Dorsolateral prefrontal cortex (tissue), 120 donors: ENCODE measurements at regions of chr10 and their contacts with region 1.

Region 1: GRCh38 chr10:52740913-52741675 is 31.5 kb downstream of the MBL2 start:
- DNase-seq: peak in 2 of 10 donors; percentile 29 to 52
- H3K4me3 ChIP-seq: no peak overlapping the region
- H3K27ac ChIP-seq: no peak overlapping the region
- H3K27me3 ChIP-seq: peaks cover 0 to 4% (median 0%) of the 10 kb centered on the region in 45 donors
- CTCF ChIP-seq: peak; percentile 37 to 83 (median 74)

Region 2: GRCh38 chr10:52187521-52188258 is 553.4 kb before region 1 on chr10:
- intact Hi-C with region 1: no loop called
- DNase-seq: no peak
- H3K4me3 ChIP-seq: no peak overlapping the region
- H3K27ac ChIP-seq: no peak overlapping the region
- H3K27me3 ChIP-seq: peaks cover 0 to 4% (median 0%) of the 10 kb centered on the region in 45 donors
- CTCF ChIP-seq: no peak

Region 3: GRCh38 chr10:52720018-52720417 is 21.1 kb before region 1 on chr10:
- intact Hi-C with region 1: no loop called
- DNase-seq: no peak
- H3K4me3 ChIP-seq: no peak overlapping the region
- H3K27ac ChIP-seq: no peak overlapping the region
- H3K27me3 ChIP-seq: no peaks in the 10 kb centered on the region
- CTCF ChIP-seq: no peak

Region 4: DNA sequence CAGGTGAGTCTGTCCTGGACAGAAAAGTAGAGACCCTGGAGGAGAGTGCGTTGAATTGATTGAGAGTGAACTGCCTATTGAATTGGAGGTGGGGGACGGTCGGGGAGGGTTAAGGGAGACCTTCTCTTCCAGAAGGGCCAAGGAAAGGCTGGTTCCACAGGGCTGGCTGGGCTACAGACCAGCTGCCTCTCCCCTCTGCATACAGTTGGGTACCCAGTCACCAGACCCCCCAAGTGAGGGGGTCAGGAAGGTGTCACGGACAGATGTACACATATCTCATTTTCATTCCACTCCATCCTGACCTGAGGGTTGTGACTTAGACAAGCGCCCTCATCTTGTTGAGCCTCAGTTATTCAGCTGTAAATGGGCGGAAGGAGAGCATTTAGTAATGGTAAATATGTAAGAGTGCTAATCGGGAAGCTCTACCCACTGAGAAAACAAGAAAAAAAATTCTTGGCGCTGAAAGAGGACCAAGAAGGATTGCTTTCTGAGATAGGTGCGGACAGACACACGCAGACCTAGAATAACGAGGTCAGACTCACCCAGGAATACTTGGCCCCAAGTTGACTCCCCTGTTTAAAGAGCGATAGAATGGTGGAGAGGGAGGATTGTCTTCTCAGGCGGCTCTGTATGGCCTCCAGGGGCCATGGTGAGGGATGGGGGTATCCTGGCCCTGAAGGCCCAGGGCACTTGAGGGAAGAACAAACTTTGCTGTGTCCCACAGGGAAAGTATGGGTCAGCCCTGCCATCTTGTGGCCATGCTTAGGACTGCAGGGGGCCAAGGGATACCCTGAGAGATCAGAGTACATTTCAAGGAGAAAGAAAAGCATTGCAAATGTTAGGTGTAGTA is 38.7 kb after region 1 on chr10:
- intact Hi-C with region 1: loop called in 1 of 2 experiments (anchors 2 kb)
- DNase-seq: peak in 9 of 10 donors; percentile 17 to 78 (median 64)
- H3K4me3 ChIP-seq: no peak overlapping the region
- H3K27ac ChIP-seq: no peak overlapping the region
- H3K27me3 ChIP-seq: peaks cover 0 to 13% (median 0%) of the 10 kb centered on the region in 45 donors
- CTCF ChIP-seq: peak; percentile 42 to 96 (median 84)